IMR-90 (cell line): ENCODE measurements at regions of chr6 and their contacts with region 1.

Region 1: GRCh38 chr6:110039364-110039980 is 61.4 kb downstream of the GPR6 start:
- DNase-seq: peak; percentile 87
- ATAC-seq: peak; percentile 90
- H3K4me3 ChIP-seq: 0 out of 2 replicates have a peak overlapping the region, but pooled peaks have one; percentile 5
- H3K27ac ChIP-seq: no peak overlapping the region
- H3K4me1 ChIP-seq: no peaks in the 10 kb centered on the region
- H3K27me3 ChIP-seq: peaks cover 7% of the 10 kb centered on the region
- CTCF ChIP-seq: peak; percentile 98
- POLR2A ChIP-seq: peak; percentile 51; the same call in 1 of the 2 replicates
- RAD21 ChIP-seq: peak; percentile 97

Region 2: DNA sequence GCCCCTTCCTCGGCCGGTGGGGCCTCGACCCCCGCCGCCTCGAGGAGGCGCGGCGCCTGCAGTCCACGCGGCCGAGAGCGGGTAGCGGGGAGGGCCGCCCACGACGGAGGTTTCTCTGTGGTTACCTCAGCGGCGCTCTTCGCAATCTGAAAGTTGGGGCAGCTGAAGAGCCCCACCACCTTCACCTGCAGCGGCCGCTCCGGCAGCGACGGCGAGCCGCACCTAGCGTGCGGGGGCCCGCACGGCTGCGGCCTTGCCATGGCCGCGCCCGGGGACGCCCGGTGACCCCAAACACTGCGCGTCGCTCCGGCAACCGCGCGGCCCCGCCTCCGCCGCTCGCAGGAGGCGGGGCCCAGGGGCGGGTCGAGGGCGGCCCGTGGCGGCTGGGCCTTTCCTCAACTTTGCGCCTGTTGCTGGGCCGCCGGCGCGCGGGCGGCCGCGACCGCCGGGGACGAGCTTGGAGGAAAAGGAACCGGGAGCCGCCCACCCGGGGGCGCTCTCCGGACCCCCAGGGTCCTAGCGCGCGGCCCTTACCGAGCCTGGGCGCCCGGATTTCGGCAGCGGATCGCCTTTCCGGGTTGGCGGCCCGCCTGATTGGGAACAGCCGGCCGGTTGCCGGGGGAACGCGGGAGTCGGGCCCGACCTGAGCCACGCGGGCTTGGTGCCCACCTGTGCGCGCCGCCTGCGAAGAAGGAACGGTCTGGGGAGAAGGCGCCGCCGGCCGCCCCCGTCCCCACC is 599.0 kb before region 1 on chr6 and contains the starts of genes PPIL6 and SMPD2:
- CTCF ChIA-PET with region 1: no interaction called
- POLR2A ChIA-PET with region 1: no interaction called
- dilution Hi-C with region 1: no loop called
- in situ Hi-C with region 1: no loop called
- intact Hi-C with region 1: no loop called
- DNase-seq: peak; percentile 87
- ATAC-seq: peak; percentile 90
- H3K4me3 ChIP-seq: peak within 1 kb of the TSS; percentile 70
- H3K27ac ChIP-seq: peak within 1 kb of the TSS; percentile 48
- H3K4me1 ChIP-seq: peaks cover 8% of the 10 kb centered on the region
- H3K27me3 ChIP-seq: no peaks in the 10 kb centered on the region
- CTCF ChIP-seq: peak; percentile 46
- POLR2A ChIP-seq: peak; percentile 61
- RAD21 ChIP-seq: no peak
- total RNA-seq, gene PPIL6: 0.18 and 1.4 TPM in 2 replicates
- total RNA-seq, gene SMPD2: 8.3 and 9.0 TPM in 2 replicates

Region 3: GRCh38 chr6:109526905-109527628 is 512.4 kb before region 1 on chr6:
- CTCF ChIA-PET with region 1: interaction called, 5 read pairs
- POLR2A ChIA-PET with region 1: no interaction called
- dilution Hi-C with region 1: no loop called
- in situ Hi-C with region 1: no loop called
- intact Hi-C with region 1: loop called (anchors 1 kb)
- DNase-seq: peak; percentile 69
- ATAC-seq: peak; percentile 91
- H3K4me3 ChIP-seq: no peak overlapping the region
- H3K27ac ChIP-seq: no peak overlapping the region
- H3K4me1 ChIP-seq: no peaks in the 10 kb centered on the region
- H3K27me3 ChIP-seq: peaks cover 5% of the 10 kb centered on the region; the same call in 1 of the 2 replicates
- CTCF ChIP-seq: peak; percentile 68
- POLR2A ChIP-seq: no peak
- RAD21 ChIP-seq: peak; percentile 76

Region 4: GRCh38 chr6:109595998-109596397 is 443.5 kb before region 1 on chr6:
- CTCF ChIA-PET with region 1: no interaction called
- POLR2A ChIA-PET with region 1: no interaction called
- dilution Hi-C with region 1: no loop called
- in situ Hi-C with region 1: no loop called
- intact Hi-C with region 1: loop called (anchors 1 kb)
- DNase-seq: peak; percentile 57
- ATAC-seq: peak; percentile 79
- H3K4me3 ChIP-seq: no peak overlapping the region
- H3K27ac ChIP-seq: no peak overlapping the region
- H3K4me1 ChIP-seq: no peaks in the 10 kb centered on the region
- H3K27me3 ChIP-seq: no peaks in the 10 kb centered on the region
- CTCF ChIP-seq: peak; percentile 54
- POLR2A ChIP-seq: no peak
- RAD21 ChIP-seq: peak; percentile 59

Region 5: GRCh38 chr6:109705258-109705657 is 334.2 kb before region 1 on chr6:
- CTCF ChIA-PET with region 1: interaction called, 78 read pairs
- POLR2A ChIA-PET with region 1: no interaction called
- dilution Hi-C with region 1: loop called (anchors 25 kb)
- in situ Hi-C with region 1: loop called (anchors 5 kb)
- intact Hi-C with region 1: loop called (anchors 1 kb)
- DNase-seq: peak; percentile 88
- ATAC-seq: peak; percentile 98
- H3K4me3 ChIP-seq: no peak overlapping the region
- H3K27ac ChIP-seq: no peak overlapping the region
- H3K4me1 ChIP-seq: no peaks in the 10 kb centered on the region
- H3K27me3 ChIP-seq: no peaks in the 10 kb centered on the region
- CTCF ChIP-seq: peak; percentile 100; the same call in 1 of the 2 replicates
- POLR2A ChIP-seq: peak; percentile 68; the same call in 1 of the 2 replicates
- RAD21 ChIP-seq: peak; percentile 100

Region 6: DNA sequence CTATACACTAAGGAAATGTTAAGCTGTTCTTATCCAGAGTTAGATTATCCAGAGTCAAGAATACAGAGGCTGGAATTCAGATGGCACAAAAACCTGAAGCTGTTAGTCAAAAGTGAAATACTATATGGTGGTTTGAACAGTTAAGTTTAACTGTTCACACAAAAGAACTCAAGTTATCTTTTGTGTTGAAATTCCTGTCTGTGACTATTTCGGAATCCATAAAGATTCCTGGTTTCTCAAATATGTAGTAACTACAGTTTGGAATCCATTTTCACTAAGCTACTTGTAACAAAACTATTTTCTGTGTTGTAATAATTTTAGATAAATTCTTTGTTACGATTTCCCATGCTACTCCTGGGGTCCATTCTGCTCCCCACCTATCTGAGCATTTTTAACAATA is 323.9 kb before region 1 on chr6:
- CTCF ChIA-PET with region 1: interaction called, 15 read pairs
- POLR2A ChIA-PET with region 1: no interaction called
- dilution Hi-C with region 1: loop called (anchors 25 kb)
- in situ Hi-C with region 1: no loop called
- intact Hi-C with region 1: no loop called
- DNase-seq: no peak
- ATAC-seq: no peak; the same call in 1 of the 2 replicates
- H3K4me3 ChIP-seq: no peak overlapping the region
- H3K27ac ChIP-seq: no peak overlapping the region
- H3K4me1 ChIP-seq: no peaks in the 10 kb centered on the region
- H3K27me3 ChIP-seq: no peaks in the 10 kb centered on the region
- CTCF ChIP-seq: no peak
- POLR2A ChIP-seq: no peak
- RAD21 ChIP-seq: no peak

Region 7: GRCh38 chr6:109793793-109794192 is 245.7 kb before region 1 on chr6:
- CTCF ChIA-PET with region 1: interaction called, 4 read pairs
- POLR2A ChIA-PET with region 1: no interaction called
- dilution Hi-C with region 1: no loop called
- in situ Hi-C with region 1: no loop called
- intact Hi-C with region 1: loop called (anchors 10 kb)
- DNase-seq: peak; percentile 98
- ATAC-seq: peak; percentile 84
- H3K4me3 ChIP-seq: no peak overlapping the region
- H3K27ac ChIP-seq: no peak overlapping the region
- H3K4me1 ChIP-seq: peaks cover 15% of the 10 kb centered on the region
- H3K27me3 ChIP-seq: no peaks in the 10 kb centered on the region
- CTCF ChIP-seq: no peak
- POLR2A ChIP-seq: no peak
- RAD21 ChIP-seq: no peak

Region 8: DNA sequence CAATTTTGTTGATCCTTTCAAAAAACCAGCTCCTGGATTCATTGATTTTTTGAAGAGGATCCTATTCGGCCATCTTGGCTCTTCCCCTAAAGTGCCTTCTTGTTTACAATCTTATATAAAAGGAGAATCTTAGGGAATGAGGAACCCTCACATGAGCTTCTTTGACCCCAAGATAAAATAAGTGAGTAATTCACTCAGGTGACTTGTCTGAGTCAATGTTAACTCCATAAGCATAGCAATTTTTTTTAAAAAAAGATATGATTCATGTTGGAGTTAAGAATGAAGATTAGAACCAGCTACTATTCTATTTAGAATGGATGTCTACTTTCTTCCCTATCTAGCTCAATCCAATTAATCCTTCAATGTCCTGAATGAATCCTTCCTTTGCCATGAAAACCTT is 119.0 kb after region 1 on chr6:
- CTCF ChIA-PET with region 1: no interaction called
- POLR2A ChIA-PET with region 1: no interaction called
- dilution Hi-C with region 1: no loop called
- in situ Hi-C with region 1: no loop called
- intact Hi-C with region 1: no loop called
- DNase-seq: peak; percentile 10
- ATAC-seq: no peak
- H3K4me3 ChIP-seq: no peak overlapping the region
- H3K27ac ChIP-seq: no peak overlapping the region
- H3K4me1 ChIP-seq: no peaks in the 10 kb centered on the region
- H3K27me3 ChIP-seq: no peaks in the 10 kb centered on the region
- CTCF ChIP-seq: no peak
- POLR2A ChIP-seq: no peak
- RAD21 ChIP-seq: no peak

Region 9: GRCh38 chr6:110389689-110390382 is 350.4 kb after region 1 on chr6:
- CTCF ChIA-PET with region 1: interaction called, 27 read pairs
- POLR2A ChIA-PET with region 1: no interaction called
- dilution Hi-C with region 1: no loop called
- in situ Hi-C with region 1: no loop called
- intact Hi-C with region 1: loop called (anchors 1 kb)
- DNase-seq: no peak
- ATAC-seq: no peak
- H3K4me3 ChIP-seq: no peak overlapping the region
- H3K27ac ChIP-seq: no peak overlapping the region
- H3K4me1 ChIP-seq: no peaks in the 10 kb centered on the region
- H3K27me3 ChIP-seq: peaks cover 6% of the 10 kb centered on the region
- CTCF ChIP-seq: no peak
- POLR2A ChIP-seq: no peak
- RAD21 ChIP-seq: no peak